Mammary epithelial cell (primary cell): ENCODE measurements at regions of chr9 and their contacts with region 1.

Region 1: DNA sequence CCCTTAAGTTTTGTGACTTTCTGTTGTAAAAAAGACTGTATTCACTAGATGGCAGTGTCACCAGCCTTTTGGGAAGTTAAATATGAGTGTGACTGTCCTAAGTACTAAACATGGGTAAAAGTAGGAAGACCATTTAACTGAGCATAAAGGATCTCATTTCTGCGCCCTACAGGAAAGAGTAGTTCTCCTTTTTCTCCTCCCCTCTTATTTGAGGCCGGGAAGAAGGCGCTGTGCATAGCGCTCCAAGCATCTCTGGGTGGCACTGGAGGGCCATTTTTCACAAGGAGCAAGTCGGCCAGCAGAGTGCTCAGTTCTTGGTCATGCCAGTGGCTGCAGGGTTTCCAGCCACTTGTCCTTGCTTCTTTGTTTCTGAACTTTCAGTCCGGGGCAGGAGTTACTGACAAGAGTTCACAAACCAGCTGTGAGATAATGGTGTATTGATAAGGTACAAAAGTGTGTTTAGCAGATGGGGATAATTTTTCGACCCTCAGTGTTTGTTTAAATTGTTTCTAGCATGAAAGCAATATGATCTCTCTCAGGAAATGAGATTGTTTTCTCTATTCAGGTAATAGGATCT is 227.6 kb upstream of the DMRT1 start:
- DNase-seq: peak; percentile 80
- H3K4me3 ChIP-seq: no peak overlapping the region
- H3K27ac ChIP-seq: peak overlapping the region; percentile 39
- H3K4me1 ChIP-seq: peaks cover 31% of the 10 kb centered on the region
- H3K27me3 ChIP-seq: no peaks in the 10 kb centered on the region
- CTCF ChIP-seq: peak; percentile 87 to 94

Region 2: DNA sequence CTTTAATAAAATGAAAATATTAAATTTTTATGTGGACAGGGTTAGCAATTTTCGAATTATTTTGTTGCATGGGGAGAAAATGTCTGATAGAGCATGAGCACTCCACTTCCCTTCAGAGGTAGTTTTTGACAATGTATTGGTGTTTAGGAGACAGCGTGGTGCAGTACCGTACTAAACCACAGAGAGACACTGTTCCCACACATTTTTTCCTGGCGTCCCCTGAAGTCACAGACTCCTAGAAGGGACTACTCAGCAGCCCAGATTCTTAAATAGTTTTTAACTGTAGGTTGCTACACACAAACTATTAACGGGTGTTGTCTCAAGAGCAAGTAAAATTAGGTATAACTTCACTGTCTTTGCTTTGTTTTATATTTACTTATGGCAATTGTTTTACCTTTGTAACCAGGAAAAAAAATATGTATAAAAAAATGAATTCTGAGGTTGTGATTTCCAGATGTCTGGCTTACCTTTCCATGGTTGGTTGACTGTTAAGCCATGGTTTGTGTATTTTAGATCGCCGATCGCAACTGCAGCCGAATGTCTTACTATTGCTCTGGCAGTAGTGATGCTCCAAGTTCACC is 228.0 kb before region 1 on chr9:
- CTCF ChIA-PET with region 1: no interaction called
- dilution Hi-C with region 1: no loop called
- in situ Hi-C with region 1: loop called in 1 of 2 experiments (anchors 10 kb)
- intact Hi-C with region 1: loop called (anchors 1 kb)
- DNase-seq: peak; percentile 53
- H3K4me3 ChIP-seq: no peak overlapping the region
- H3K27ac ChIP-seq: no peak overlapping the region
- H3K4me1 ChIP-seq: no peaks in the 10 kb centered on the region
- H3K27me3 ChIP-seq: no peaks in the 10 kb centered on the region
- CTCF ChIP-seq: peak; percentile 96 to 99

Region 3: DNA sequence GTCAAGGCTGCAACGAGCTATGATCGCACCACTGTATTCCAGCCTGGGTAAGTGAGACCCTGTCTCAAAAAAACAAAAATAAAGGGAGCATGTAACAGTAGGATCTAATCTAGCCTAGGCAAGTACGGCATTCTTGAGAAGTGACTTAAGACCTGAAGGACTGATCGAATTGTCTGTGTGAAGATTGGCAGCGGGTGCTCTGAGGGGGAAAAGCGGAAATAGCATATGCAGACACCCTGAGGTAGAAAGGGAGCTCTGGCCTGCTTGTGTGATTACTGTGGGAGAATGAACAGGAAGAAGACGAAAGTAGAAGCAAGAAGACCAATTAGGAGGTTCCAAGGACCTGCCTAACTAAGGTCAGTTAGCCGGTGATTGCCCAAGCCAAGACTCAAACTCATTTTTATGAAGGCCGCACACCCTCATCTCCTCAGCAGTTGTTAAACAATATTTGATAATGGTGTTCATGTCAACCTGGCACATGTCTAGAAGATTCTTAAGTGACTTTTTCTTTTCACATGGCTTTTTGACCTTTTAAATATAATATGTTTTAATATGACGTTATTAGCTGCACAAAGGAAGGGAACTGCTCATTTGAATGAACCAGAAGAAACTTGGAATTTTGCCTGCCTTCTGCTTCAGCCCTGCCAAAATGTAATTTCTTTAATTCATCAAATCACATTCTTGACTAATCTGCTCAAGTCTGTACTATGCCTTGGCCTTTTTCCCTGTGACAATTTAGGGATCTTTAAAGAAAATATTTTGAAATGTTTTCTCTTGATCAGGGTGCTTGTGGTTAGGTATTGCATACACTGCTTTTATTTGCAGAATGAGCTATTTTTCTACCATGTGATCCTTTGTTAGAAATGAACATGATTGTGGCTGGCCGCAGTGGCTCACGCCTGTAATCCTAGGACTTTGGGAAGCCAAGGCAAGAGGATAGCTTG is 61.6 kb before region 1 on chr9:
- CTCF ChIA-PET with region 1: no interaction called
- dilution Hi-C with region 1: no loop called
- in situ Hi-C with region 1: no loop called
- intact Hi-C with region 1: no loop called
- DNase-seq: no peak
- H3K4me3 ChIP-seq: no peak overlapping the region
- H3K27ac ChIP-seq: no peak overlapping the region
- H3K4me1 ChIP-seq: peaks cover 9% of the 10 kb centered on the region
- H3K27me3 ChIP-seq: no peaks in the 10 kb centered on the region
- CTCF ChIP-seq: no peak

Region 4: DNA sequence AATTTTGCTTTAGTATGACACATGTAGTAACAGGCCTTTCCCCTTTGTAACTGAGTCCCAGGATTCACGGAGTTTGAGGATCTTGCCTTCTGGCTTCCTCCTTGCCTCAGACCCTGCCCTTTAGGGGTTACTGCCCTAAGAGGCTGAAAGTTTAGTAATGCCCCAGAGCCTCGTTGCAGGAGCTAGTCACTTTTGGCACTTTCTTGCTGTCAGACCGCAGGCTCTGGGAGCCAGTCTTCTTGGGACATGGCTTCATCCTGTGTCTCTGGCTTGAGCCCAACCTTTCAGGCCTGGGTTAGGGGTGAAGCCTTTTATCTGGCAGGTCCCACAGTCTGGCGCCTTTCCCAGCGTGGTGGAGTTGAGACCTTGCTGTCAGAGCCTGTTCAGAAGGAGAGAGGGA is 42.0 kb after region 1 on chr9:
- CTCF ChIA-PET with region 1: no interaction called
- dilution Hi-C with region 1: no loop called
- in situ Hi-C with region 1: no loop called
- intact Hi-C with region 1: loop called (anchors 1 kb)
- DNase-seq: peak; percentile 61
- H3K4me3 ChIP-seq: no peak overlapping the region
- H3K27ac ChIP-seq: peak overlapping the region; percentile 79
- H3K4me1 ChIP-seq: peaks cover 32% of the 10 kb centered on the region
- H3K27me3 ChIP-seq: no peaks in the 10 kb centered on the region
- CTCF ChIP-seq: no peak

Region 5: GRCh38 chr9:706606-707459 is 93.0 kb after region 1 on chr9:
- CTCF ChIA-PET with region 1: no interaction called
- dilution Hi-C with region 1: no loop called
- in situ Hi-C with region 1: no loop called
- intact Hi-C with region 1: loop called (anchors 5 kb)
- DNase-seq: peak; percentile 83
- H3K4me3 ChIP-seq: peak overlapping the region; percentile 48 to 57 (median 50)
- H3K27ac ChIP-seq: peak overlapping the region; percentile 90
- H3K4me1 ChIP-seq: peaks cover 20% of the 10 kb centered on the region
- H3K27me3 ChIP-seq: no peaks in the 10 kb centered on the region
- CTCF ChIP-seq: no peak

Region 6: GRCh38 chr9:763692-764524 is 150.0 kb after region 1 on chr9:
- CTCF ChIA-PET with region 1: no interaction called
- dilution Hi-C with region 1: no loop called
- in situ Hi-C with region 1: loop called (anchors 5 kb)
- intact Hi-C with region 1: loop called (anchors 1 kb)
- DNase-seq: peak; percentile 74
- H3K4me3 ChIP-seq: peak overlapping the region in 1 of 3 experiments; percentile 26
- H3K27ac ChIP-seq: no peak overlapping the region
- H3K4me1 ChIP-seq: peaks cover 7% of the 10 kb centered on the region
- H3K27me3 ChIP-seq: peaks cover 2% of the 10 kb centered on the region
- CTCF ChIP-seq: peak; percentile 98 to 99

Region 7: GRCh38 chr9:893843-894420 is 280.1 kb after region 1 on chr9:
- CTCF ChIA-PET with region 1: no interaction called
- dilution Hi-C with region 1: no loop called
- in situ Hi-C with region 1: no loop called
- intact Hi-C with region 1: loop called (anchors 5 kb)
- DNase-seq: peak; percentile 54
- H3K4me3 ChIP-seq: no peak overlapping the region
- H3K27ac ChIP-seq: no peak overlapping the region
- H3K4me1 ChIP-seq: no peaks in the 10 kb centered on the region
- H3K27me3 ChIP-seq: no peaks in the 10 kb centered on the region
- CTCF ChIP-seq: peak; percentile 81 to 86